ENCODE measurements at regions of chr4 and their contacts with region 1.

Region 1: DNA sequence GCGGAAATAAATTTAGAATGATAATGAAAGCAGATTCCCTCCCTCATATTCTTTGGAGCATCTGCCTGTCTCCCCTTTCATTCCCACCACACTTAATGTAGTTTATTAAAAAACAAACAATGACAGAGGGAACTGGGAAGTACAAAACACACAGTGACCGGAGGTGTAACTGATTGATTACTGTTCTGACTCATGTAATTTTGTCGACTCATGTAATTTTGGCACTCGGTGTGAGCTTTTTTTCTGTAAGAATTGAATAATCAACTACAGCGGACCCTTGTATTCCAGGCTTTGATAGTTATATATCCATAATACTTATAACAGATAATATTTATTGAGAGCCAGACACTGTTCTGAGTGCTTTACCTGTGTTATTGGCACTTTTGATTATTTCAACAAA is 110.4 kb downstream of the PALLD start:
- DNase-seq: no peak
- ATAC-seq: no peak
- H3K4me3 ChIP-seq: no peak overlapping the region
- H3K27ac ChIP-seq: peak overlapping the region in 1 of 4 donors; percentile 10
- H3K4me1 ChIP-seq: peaks cover 21 to 25% of the 10 kb centered on the region in 2 donors
- H3K27me3 ChIP-seq: no peaks in the 10 kb centered on the region
- CTCF ChIP-seq: no peak
- POLR2A ChIP-seq: no peak

Region 2: GRCh38 chr4:168398589-168398988 is 208.6 kb before region 1 on chr4:
- in situ Hi-C with region 1: no loop called
- intact Hi-C with region 1: no loop called
- DNase-seq: no peak
- ATAC-seq: no peak
- H3K4me3 ChIP-seq: no peak overlapping the region
- H3K27ac ChIP-seq: no peak overlapping the region
- H3K4me1 ChIP-seq: no peaks in the 10 kb centered on the region
- H3K27me3 ChIP-seq: no peaks in the 10 kb centered on the region
- CTCF ChIP-seq: no peak
- POLR2A ChIP-seq: no peak

Region 3: DNA sequence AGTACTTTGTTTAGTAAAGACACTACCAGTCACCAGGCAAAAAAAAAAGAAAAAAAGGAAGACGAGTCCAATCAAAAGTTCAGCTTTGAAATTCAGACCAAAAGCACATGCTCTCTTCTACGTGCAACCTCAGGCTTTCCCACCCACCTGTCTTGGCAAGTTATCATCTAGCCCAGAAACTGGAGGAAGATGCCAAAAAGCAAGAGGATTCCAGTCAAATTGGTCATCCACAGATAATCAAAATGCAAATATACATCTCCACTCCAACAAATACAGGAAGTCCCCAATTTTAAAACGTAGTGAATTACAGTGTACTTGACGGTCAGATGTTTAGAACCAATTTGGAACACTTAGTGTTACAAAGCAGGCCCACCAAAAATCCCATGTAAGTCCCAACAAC is 13.8 kb before region 1 on chr4:
- in situ Hi-C with region 1: no loop called
- intact Hi-C with region 1: loop called (anchors 2 kb)
- DNase-seq: no peak
- ATAC-seq: no peak
- H3K4me3 ChIP-seq: no peak overlapping the region
- H3K27ac ChIP-seq: no peak overlapping the region
- H3K4me1 ChIP-seq: peaks cover 13 to 22% of the 10 kb centered on the region in 2 donors
- H3K27me3 ChIP-seq: no peaks in the 10 kb centered on the region
- CTCF ChIP-seq: no peak
- POLR2A ChIP-seq: no peak

Measured in gastrocnemius medialis (tissue), 4 donors.